Activated B cell treated with CpG ODN at 0.5 μM for 24 hours (primary cell): ENCODE measurements at regions of chr12 and their contacts with region 1.

Region 1: GRCh38 chr12:98490501-98491453 is 24.6 kb upstream of the TMPO start:
- DNase-seq: peak; percentile 72
- ATAC-seq: peak; percentile 98
- H3K4me3 Mint-ChIP-seq: peak overlapping the region; percentile 12
- H3K27ac Mint-ChIP-seq: peak overlapping the region; percentile 82
- H3K4me1 Mint-ChIP-seq: peaks cover 4% of the 10 kb centered on the region
- H3K27me3 Mint-ChIP-seq: peaks cover under 1% of the 10 kb centered on the region
- CTCF ChIP-seq: no peak

Region 2: DNA sequence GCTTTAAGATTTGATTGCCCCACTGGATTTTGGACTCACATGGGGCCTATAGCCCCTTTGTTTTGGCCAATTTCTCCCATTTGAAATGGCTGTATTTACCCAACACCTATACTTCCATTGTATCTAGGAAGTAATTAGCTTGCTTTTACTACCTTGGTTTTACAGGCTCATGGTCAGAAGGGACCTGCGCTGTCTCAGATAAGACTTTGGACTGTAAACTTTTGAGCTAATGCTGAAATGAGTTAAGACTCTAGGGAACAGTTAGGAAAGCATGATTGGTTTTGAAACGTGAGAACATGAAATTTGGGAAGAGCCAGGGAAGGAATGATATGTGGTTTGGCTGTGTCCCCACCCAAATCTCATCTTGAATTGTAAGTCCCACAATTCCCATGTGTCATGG is 394.3 kb before region 1 on chr12:
- CTCF ChIA-PET with region 1: no interaction called
- POLR2A ChIA-PET with region 1: no interaction called
- intact Hi-C with region 1: no loop called
- DNase-seq: no peak
- ATAC-seq: no peak
- H3K4me3 Mint-ChIP-seq: no peak overlapping the region
- H3K27ac Mint-ChIP-seq: no peak overlapping the region
- H3K4me1 Mint-ChIP-seq: no peaks in the 10 kb centered on the region
- H3K27me3 Mint-ChIP-seq: no peaks in the 10 kb centered on the region
- CTCF ChIP-seq: no peak

Region 3: GRCh38 chr12:98509063-98509462 is 18.3 kb after region 1 on chr12:
- CTCF ChIA-PET with region 1: interaction called, 101 read pairs
- POLR2A ChIA-PET with region 1: interaction called, 3 read pairs
- intact Hi-C with region 1: no loop called
- DNase-seq: no peak
- ATAC-seq: no peak
- H3K4me3 Mint-ChIP-seq: no peak overlapping the region
- H3K27ac Mint-ChIP-seq: no peak overlapping the region
- H3K4me1 Mint-ChIP-seq: peaks cover 25% of the 10 kb centered on the region
- H3K27me3 Mint-ChIP-seq: peaks cover under 1% of the 10 kb centered on the region
- CTCF ChIP-seq: no peak

Region 4: GRCh38 chr12:98516184-98516873 is 25.6 kb after region 1 on chr12:
- CTCF ChIA-PET with region 1: interaction called, 101 read pairs
- POLR2A ChIA-PET with region 1: interaction called, 38 read pairs
- intact Hi-C with region 1: loop called (anchors 1 kb)
- DNase-seq: peak; percentile 71
- ATAC-seq: peak; percentile 63
- H3K4me3 Mint-ChIP-seq: peak overlapping the region; percentile 98
- H3K27ac Mint-ChIP-seq: peak overlapping the region; percentile 97
- H3K4me1 Mint-ChIP-seq: peaks cover 61% of the 10 kb centered on the region
- H3K27me3 Mint-ChIP-seq: no peaks in the 10 kb centered on the region
- CTCF ChIP-seq: no peak

Region 5: DNA sequence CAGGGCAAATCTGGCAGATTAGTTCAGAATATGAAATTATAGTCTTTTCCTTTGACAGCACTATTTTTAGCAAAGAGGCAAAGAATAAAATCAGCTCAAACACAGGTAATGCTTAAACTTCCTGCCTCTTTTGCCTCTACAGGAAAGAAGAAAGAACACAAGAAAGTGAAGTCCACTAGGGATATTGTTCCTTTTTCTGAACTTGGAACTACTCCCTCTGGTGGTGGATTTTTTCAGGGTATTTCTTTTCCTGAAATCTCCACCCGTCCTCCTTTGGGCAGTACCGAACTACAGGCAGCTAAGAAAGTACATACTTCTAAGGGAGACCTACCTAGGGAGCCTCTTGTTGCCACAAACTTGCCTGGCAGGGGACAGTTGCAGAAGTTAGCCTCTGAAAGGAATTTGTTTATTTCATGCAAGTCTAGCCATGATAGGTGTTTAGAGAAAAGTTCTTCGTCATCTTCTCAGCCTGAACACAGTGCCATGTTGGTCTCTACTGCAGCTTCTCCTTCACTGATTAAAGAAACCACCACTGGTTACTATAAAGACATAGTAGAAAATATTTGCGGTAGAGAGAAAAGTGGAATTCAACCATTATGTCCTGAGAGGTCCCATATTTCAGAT is 42.0 kb after region 1 on chr12:
- CTCF ChIA-PET with region 1: interaction called, 32 read pairs
- POLR2A ChIA-PET with region 1: interaction called, 4 read pairs
- intact Hi-C with region 1: loop called (anchors 1 kb)
- DNase-seq: no peak
- ATAC-seq: peak; percentile 37
- H3K4me3 Mint-ChIP-seq: no peak overlapping the region
- H3K27ac Mint-ChIP-seq: no peak overlapping the region
- H3K4me1 Mint-ChIP-seq: peaks cover under 1% of the 10 kb centered on the region
- H3K27me3 Mint-ChIP-seq: no peaks in the 10 kb centered on the region
- CTCF ChIP-seq: no peak

Region 6: GRCh38 chr12:98653866-98654493 is 163.2 kb after region 1 on chr12:
- CTCF ChIA-PET with region 1: interaction called, 4 read pairs
- POLR2A ChIA-PET with region 1: no interaction called
- intact Hi-C with region 1: loop called (anchors 1 kb)
- DNase-seq: no peak
- ATAC-seq: peak; percentile 56
- H3K4me3 Mint-ChIP-seq: no peak overlapping the region
- H3K27ac Mint-ChIP-seq: no peak overlapping the region
- H3K4me1 Mint-ChIP-seq: no peaks in the 10 kb centered on the region
- H3K27me3 Mint-ChIP-seq: no peaks in the 10 kb centered on the region
- CTCF ChIP-seq: peak; percentile 21